T-cell (primary cell): ENCODE measurements at regions of chr9 and their contacts with region 1.

Region 1: GRCh38 chr9:105608721-105609598 is 51.0 kb downstream of the FKTN start:
- DNase-seq: peak in 3 of 35 experiments; percentile 1 to 62 (median 2)
- ATAC-seq: peak in 1 of 4 experiments; percentile 43
- H3K4me3 ChIP-seq: no peak overlapping the region
- H3K4me3 Mint-ChIP-seq: no peak overlapping the region
- H3K27ac ChIP-seq: no peak overlapping the region
- H3K27ac Mint-ChIP-seq: no peak overlapping the region
- H3K4me1 ChIP-seq: no peaks in the 10 kb centered on the region
- H3K4me1 Mint-ChIP-seq: no peaks in the 10 kb centered on the region
- H3K27me3 ChIP-seq: no peaks in the 10 kb centered on the region
- H3K27me3 Mint-ChIP-seq: no peaks in the 10 kb centered on the region

Region 2: GRCh38 chr9:105712773-105713172 is 103.8 kb after region 1 on chr9:
- CTCF ChIA-PET with region 1: interaction called in 1 of 2 experiments, 10 read pairs
- POLR2A ChIA-PET with region 1: no interaction called
- DNase-seq: no peak
- ATAC-seq: no peak
- H3K4me3 ChIP-seq: no peak overlapping the region
- H3K4me3 Mint-ChIP-seq: no peak overlapping the region
- H3K27ac ChIP-seq: no peak overlapping the region
- H3K27ac Mint-ChIP-seq: no peak overlapping the region
- H3K4me1 ChIP-seq: peaks cover 0 to 2% of the 10 kb centered on the region in 2 experiments
- H3K4me1 Mint-ChIP-seq: peaks cover 8 to 12% (median 8%) of the 10 kb centered on the region in 3 donors
- H3K27me3 ChIP-seq: no peaks in the 10 kb centered on the region
- H3K27me3 Mint-ChIP-seq: no peaks in the 10 kb centered on the region